Gastrocnemius medialis (tissue), 4 donors: ENCODE measurements at regions of chr9 and their contacts with region 1.

Region 1: DNA sequence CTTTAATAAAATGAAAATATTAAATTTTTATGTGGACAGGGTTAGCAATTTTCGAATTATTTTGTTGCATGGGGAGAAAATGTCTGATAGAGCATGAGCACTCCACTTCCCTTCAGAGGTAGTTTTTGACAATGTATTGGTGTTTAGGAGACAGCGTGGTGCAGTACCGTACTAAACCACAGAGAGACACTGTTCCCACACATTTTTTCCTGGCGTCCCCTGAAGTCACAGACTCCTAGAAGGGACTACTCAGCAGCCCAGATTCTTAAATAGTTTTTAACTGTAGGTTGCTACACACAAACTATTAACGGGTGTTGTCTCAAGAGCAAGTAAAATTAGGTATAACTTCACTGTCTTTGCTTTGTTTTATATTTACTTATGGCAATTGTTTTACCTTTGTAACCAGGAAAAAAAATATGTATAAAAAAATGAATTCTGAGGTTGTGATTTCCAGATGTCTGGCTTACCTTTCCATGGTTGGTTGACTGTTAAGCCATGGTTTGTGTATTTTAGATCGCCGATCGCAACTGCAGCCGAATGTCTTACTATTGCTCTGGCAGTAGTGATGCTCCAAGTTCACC is 171.2 kb downstream of the DOCK8 start:
- DNase-seq: no peak
- ATAC-seq: peak; percentile 75 to 79
- H3K4me3 ChIP-seq: no peak overlapping the region
- H3K27ac ChIP-seq: no peak overlapping the region
- H3K4me1 ChIP-seq: no peaks in the 10 kb centered on the region
- H3K27me3 ChIP-seq: no peaks in the 10 kb centered on the region
- CTCF ChIP-seq: peak; percentile 68 to 80 (median 77)
- POLR2A ChIP-seq: no peak

Region 2: DNA sequence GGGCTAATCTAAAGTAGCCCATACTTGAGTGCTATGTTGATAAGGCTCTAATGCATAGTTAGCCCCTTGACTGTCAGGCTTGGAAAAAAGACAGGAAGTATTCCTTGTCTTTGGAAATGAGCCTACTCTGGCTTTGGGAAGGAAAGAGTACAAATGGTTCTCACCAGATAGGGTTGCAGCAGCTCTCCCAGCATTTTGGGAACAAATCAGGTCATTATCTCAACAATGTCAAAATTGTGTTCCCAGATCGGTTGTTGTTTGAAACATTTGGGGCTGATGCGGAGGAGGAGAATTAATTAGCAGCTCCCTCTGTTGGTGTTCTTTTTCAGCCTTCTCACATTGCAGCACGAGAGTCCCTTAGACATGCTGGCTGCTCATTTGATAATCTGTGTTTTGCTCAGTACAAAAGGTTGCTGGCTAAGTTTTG is 160.9 kb after region 1 on chr9:
- in situ Hi-C with region 1: no loop called
- intact Hi-C with region 1: loop called (anchors 5 kb)
- DNase-seq: peak in 1 of 2 donors; percentile 8
- ATAC-seq: peak; percentile 77 to 84
- H3K4me3 ChIP-seq: peak overlapping the region in 2 of 4 donors; percentile 8 to 23
- H3K27ac ChIP-seq: peak overlapping the region in 3 of 4 donors; percentile 16 to 57 (median 23)
- H3K4me1 ChIP-seq: peaks cover 11 to 15% of the 10 kb centered on the region in 2 donors
- H3K27me3 ChIP-seq: no peaks in the 10 kb centered on the region
- CTCF ChIP-seq: peak in 2 of 5 experiments; percentile 37 to 45
- POLR2A ChIP-seq: no peak

Region 3: DNA sequence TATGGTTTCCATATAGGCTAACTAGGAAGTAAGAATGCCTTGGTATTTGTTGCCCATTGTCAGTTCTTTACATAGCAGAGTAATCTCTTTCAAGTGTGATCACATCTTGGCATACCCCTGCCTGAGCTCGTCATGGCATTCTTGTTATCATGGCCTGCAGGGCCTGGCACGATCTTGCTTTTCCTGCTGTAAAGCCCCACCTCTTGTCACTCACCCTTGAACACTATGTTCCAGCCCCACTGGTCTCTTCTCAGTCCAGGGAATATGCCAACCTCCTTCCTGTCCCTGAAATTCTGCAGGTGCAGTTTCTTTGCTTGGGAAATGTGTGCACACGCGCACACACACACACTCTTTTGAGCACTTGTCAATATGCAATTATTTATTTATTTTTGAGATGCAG is 205.4 kb after region 1 on chr9:
- in situ Hi-C with region 1: no loop called
- intact Hi-C with region 1: no loop called
- DNase-seq: peak; percentile 66 to 68
- ATAC-seq: peak; percentile 91 to 96
- H3K4me3 ChIP-seq: no peak overlapping the region
- H3K27ac ChIP-seq: no peak overlapping the region
- H3K4me1 ChIP-seq: peaks cover 11 to 17% of the 10 kb centered on the region in 2 donors
- H3K27me3 ChIP-seq: no peaks in the 10 kb centered on the region
- CTCF ChIP-seq: no peak
- POLR2A ChIP-seq: no peak

Region 4: DNA sequence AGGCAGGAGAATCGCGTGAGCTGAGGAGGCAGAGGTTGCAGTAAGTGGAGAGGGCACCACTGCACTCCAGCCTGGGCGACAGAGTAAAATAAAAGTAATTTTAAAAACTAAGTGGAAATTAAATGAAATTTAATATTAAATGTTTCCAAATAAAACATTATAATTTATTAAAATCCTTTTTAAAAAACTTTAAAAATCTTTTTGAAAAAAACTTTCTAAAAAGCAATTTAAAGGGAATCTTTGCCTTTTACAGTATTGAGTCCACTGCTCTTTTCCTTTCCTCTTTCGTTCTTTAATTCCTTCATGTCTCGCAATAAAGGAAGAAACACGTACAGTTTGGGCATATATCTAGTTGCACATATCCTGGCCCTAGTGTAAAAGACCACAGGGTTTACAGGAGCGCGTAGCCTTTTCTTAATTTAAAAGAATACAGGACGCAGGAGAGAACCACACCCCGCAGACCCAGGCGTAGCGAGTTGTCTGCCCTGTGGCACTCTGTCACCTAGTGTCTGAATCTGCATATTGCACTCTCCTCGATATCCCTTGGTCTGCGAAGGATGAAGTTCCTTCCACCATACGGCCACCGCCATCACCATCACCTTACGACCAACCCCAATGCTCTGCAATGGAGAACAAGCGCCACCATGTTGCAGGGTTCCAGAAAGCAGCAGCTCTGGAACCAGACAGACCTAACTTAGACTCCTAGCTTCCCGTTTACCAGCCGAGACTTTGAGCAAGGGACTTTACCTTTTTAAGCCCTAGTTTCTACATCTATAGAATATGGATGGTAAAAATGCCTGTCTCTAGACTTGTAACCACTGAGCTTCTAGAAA is 378.0 kb after region 1 on chr9:
- in situ Hi-C with region 1: no loop called
- intact Hi-C with region 1: loop called (anchors 5 kb)
- DNase-seq: peak; percentile 56 to 66
- ATAC-seq: peak; percentile 92 to 99
- H3K4me3 ChIP-seq: peak overlapping the region in 3 of 4 donors; percentile 25 to 41 (median 33)
- H3K27ac ChIP-seq: no peak overlapping the region
- H3K4me1 ChIP-seq: peaks cover 0 to 3% of the 10 kb centered on the region in 2 donors
- H3K27me3 ChIP-seq: no peaks in the 10 kb centered on the region
- CTCF ChIP-seq: peak; percentile 90 to 96 (median 93)
- POLR2A ChIP-seq: no peak

Region 5: GRCh38 chr9:806285-807156 is 420.6 kb after region 1 on chr9:
- in situ Hi-C with region 1: no loop called
- intact Hi-C with region 1: loop called (anchors 10 kb)
- DNase-seq: no peak
- ATAC-seq: no peak
- H3K4me3 ChIP-seq: no peak overlapping the region
- H3K27ac ChIP-seq: no peak overlapping the region
- H3K4me1 ChIP-seq: no peaks in the 10 kb centered on the region
- H3K27me3 ChIP-seq: no peaks in the 10 kb centered on the region
- CTCF ChIP-seq: peak in 3 of 5 experiments; percentile 35 to 61 (median 61)
- POLR2A ChIP-seq: no peak

Region 6: GRCh38 chr9:1009101-1009707 is 623.3 kb after region 1 on chr9:
- in situ Hi-C with region 1: no loop called
- intact Hi-C with region 1: loop called (anchors 5 kb)
- DNase-seq: peak; percentile 32 to 67
- ATAC-seq: peak; percentile 88 to 92
- H3K4me3 ChIP-seq: no peak overlapping the region
- H3K27ac ChIP-seq: no peak overlapping the region
- H3K4me1 ChIP-seq: no peaks in the 10 kb centered on the region
- H3K27me3 ChIP-seq: no peaks in the 10 kb centered on the region
- CTCF ChIP-seq: peak; percentile 87 to 99 (median 94)
- POLR2A ChIP-seq: no peak